HepG2 (cell line): ENCODE measurements at regions of chr2 and their contacts with region 1.

Region 1: DNA sequence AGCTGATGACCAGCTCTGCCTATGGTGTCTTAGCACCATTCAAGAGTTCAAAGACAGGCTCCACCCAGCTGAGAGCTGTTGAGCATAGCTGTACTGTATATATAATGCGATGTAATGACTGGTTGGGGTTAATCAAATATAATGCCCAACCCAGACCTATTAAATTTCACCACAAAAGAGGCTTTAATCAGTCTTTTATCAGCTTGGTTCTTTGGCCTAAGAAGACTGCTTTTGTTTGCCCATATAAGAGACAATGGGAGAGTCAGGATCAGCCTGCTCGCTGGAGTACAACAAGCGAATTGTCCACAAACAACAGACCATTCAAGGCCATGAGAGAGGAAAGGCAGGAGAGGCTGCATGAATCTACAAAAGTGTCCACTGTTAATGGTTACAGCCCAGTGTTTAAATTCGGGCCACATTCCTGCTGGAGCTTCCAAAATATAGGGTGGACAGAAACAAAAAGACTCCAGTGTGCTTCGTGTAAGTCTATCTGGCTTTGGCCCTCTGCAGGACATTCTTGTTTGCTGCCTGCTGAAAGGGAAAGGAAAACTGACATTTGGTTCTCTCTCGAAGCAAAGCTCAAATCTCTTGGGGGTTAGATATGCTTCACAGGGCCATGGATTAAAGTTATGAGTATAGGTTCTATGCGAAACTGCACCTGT is 299.0 kb upstream of the FBXO11 start:
- DNase-seq: peak; percentile 97
- ATAC-seq: peak; percentile 97
- H3K4me3 ChIP-seq: peak overlapping the region; percentile 26 to 55 (median 34)
- H3K27ac ChIP-seq: peak overlapping the region; percentile 71
- H3K4me1 ChIP-seq: peaks cover 74% of the 10 kb centered on the region
- H3K27me3 ChIP-seq: no peaks in the 10 kb centered on the region
- CTCF ChIP-seq: peak; percentile 57
- EP300 ChIP-seq: peak in 1 of 2 experiments; percentile 66; a peak in 2 of 4 replicates
- POLR2A ChIP-seq: peak in 1 of 2 experiments; percentile 46; a peak in 1 of 4 replicates
- RAD21 ChIP-seq: peak; percentile 68; the same call in 1 of the 2 replicates

Region 2: GRCh38 chr2:46385786-46386577 is 1819.3 kb before region 1 on chr2:
- CTCF ChIA-PET with region 1: no interaction called
- POLR2A ChIA-PET with region 1: no interaction called
- in situ Hi-C with region 1: no loop called
- intact Hi-C with region 1: no loop called
- DNase-seq: no peak
- ATAC-seq: no peak
- H3K4me3 ChIP-seq: no peak overlapping the region
- H3K27ac ChIP-seq: no peak overlapping the region
- H3K4me1 ChIP-seq: peaks cover 35% of the 10 kb centered on the region
- H3K27me3 ChIP-seq: no peaks in the 10 kb centered on the region
- CTCF ChIP-seq: peak; percentile 32
- EP300 ChIP-seq: no peak
- POLR2A ChIP-seq: no peak
- RAD21 ChIP-seq: no peak

Region 3: DNA sequence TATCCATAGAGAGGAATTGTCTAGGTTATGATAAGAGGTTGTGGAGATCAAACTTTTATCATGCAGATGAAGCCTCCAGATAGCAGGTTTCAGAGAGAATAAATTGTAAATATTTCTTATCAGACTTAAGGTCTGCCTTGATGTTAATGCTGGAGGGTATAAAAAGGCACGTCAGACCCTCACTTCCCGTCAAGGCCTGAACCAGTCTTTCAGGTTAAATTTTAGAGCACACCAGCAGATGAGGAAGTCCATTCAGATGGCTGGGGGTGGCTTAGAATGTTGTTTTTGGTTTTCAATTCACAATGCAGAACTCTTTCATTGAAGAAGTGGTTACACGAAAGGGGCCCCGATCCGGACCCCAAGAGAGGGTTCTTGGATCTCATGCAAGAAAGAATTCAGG is 154.6 kb before region 1 on chr2:
- CTCF ChIA-PET with region 1: no interaction called
- POLR2A ChIA-PET with region 1: no interaction called
- in situ Hi-C with region 1: no loop called
- intact Hi-C with region 1: no loop called
- DNase-seq: no peak
- ATAC-seq: no peak
- H3K4me3 ChIP-seq: no peak overlapping the region
- H3K27ac ChIP-seq: no peak overlapping the region
- H3K4me1 ChIP-seq: no peaks in the 10 kb centered on the region
- H3K27me3 ChIP-seq: no peaks in the 10 kb centered on the region
- CTCF ChIP-seq: no peak
- EP300 ChIP-seq: no peak
- POLR2A ChIP-seq: no peak
- RAD21 ChIP-seq: no peak

Region 4: DNA sequence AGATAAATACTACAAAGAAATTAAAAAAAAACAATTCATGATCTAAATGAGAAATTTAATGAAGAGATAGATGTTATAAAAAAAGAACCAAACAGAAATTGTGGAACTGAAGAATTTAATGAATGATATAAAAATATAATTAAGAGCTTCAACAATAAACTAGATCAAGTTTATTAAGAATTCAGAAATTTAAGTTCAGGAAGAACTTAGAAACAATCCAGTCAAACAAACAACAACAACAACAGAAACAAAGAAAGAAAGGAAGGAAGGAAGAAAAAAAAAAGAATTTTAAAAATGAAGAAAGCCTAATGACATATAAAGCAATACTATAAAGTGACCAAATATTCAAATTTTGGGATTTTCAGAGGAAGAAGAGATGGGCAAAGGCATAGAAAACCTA is 48.1 kb before region 1 on chr2:
- CTCF ChIA-PET with region 1: no interaction called
- POLR2A ChIA-PET with region 1: no interaction called
- in situ Hi-C with region 1: no loop called
- intact Hi-C with region 1: loop called (anchors 1 kb)
- DNase-seq: no peak
- ATAC-seq: no peak
- H3K4me3 ChIP-seq: no peak overlapping the region
- H3K27ac ChIP-seq: no peak overlapping the region
- H3K4me1 ChIP-seq: no peaks in the 10 kb centered on the region
- H3K27me3 ChIP-seq: no peaks in the 10 kb centered on the region
- CTCF ChIP-seq: no peak
- EP300 ChIP-seq: no peak
- POLR2A ChIP-seq: no peak
- RAD21 ChIP-seq: no peak

Region 5: DNA sequence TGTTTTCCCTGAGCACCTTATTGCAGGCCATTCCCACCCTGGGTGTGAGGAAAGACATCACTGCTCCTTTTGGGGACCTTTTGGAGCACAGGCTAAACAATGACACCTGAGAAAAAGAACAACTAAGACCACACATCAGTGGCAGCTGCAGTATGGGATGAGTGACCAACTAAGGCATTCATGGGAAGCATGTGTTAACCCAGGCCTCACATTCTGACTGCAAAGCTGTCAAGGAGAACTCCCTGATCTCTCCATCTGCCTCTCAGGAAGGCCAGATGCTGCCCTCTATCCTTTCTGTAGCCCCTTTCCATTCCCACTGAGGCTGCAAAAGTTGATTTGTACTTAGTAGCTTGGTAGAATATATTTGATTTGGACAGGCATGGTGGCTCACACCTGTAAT is 21.3 kb before region 1 on chr2:
- CTCF ChIA-PET with region 1: no interaction called
- POLR2A ChIA-PET with region 1: no interaction called
- in situ Hi-C with region 1: no loop called
- intact Hi-C with region 1: no loop called
- DNase-seq: no peak
- ATAC-seq: no peak
- H3K4me3 ChIP-seq: no peak overlapping the region
- H3K27ac ChIP-seq: no peak overlapping the region
- H3K4me1 ChIP-seq: no peaks in the 10 kb centered on the region
- H3K27me3 ChIP-seq: peaks cover 0 to 6% of the 10 kb centered on the region in 2 experiments; a peak in 3 of 5 replicates
- CTCF ChIP-seq: no peak
- EP300 ChIP-seq: no peak
- POLR2A ChIP-seq: no peak
- RAD21 ChIP-seq: no peak